Caco-2 (cell line): ENCODE measurements at regions of chr7 and their contacts with region 1.

Region 1: GRCh38 chr7:111486472-111487142 is 75.7 kb downstream of the IMMP2L start:
- DNase-seq: peak in 1 of 2 experiments; percentile 43
- H3K4me3 ChIP-seq: no peak overlapping the region
- H3K4me3 Mint-ChIP-seq: no peak overlapping the region
- H3K27ac Mint-ChIP-seq: no peak overlapping the region
- H3K4me1 ChIP-seq: no peaks in the 10 kb centered on the region
- H3K4me1 Mint-ChIP-seq: no peaks in the 10 kb centered on the region
- H3K27me3 ChIP-seq: no peaks in the 10 kb centered on the region
- H3K27me3 Mint-ChIP-seq: no peaks in the 10 kb centered on the region
- CTCF ChIP-seq: peak; percentile 61 to 66

Region 2: GRCh38 chr7:111089822-111090426 is 396.7 kb before region 1 on chr7:
- CTCF ChIA-PET with region 1: no interaction called
- POLR2A ChIA-PET with region 1: no interaction called
- intact Hi-C with region 1: loop called (anchors 1 kb)
- DNase-seq: peak in 1 of 2 experiments; percentile 26
- H3K4me3 ChIP-seq: no peak overlapping the region
- H3K4me3 Mint-ChIP-seq: no peak overlapping the region
- H3K27ac Mint-ChIP-seq: no peak overlapping the region
- H3K4me1 ChIP-seq: no peaks in the 10 kb centered on the region
- H3K4me1 Mint-ChIP-seq: no peaks in the 10 kb centered on the region
- H3K27me3 ChIP-seq: no peaks in the 10 kb centered on the region
- H3K27me3 Mint-ChIP-seq: no peaks in the 10 kb centered on the region
- CTCF ChIP-seq: peak; percentile 50 to 63

Region 3: GRCh38 chr7:111312964-111313363 is 173.6 kb before region 1 on chr7:
- CTCF ChIA-PET with region 1: no interaction called
- POLR2A ChIA-PET with region 1: no interaction called
- intact Hi-C with region 1: loop called (anchors 1 kb)
- DNase-seq: peak; percentile 18 to 34
- H3K4me3 ChIP-seq: no peak overlapping the region
- H3K4me3 Mint-ChIP-seq: no peak overlapping the region
- H3K27ac Mint-ChIP-seq: no peak overlapping the region
- H3K4me1 ChIP-seq: no peaks in the 10 kb centered on the region
- H3K4me1 Mint-ChIP-seq: no peaks in the 10 kb centered on the region
- H3K27me3 ChIP-seq: no peaks in the 10 kb centered on the region
- H3K27me3 Mint-ChIP-seq: no peaks in the 10 kb centered on the region
- CTCF ChIP-seq: peak in 1 of 2 experiments; percentile 4

Region 4: DNA sequence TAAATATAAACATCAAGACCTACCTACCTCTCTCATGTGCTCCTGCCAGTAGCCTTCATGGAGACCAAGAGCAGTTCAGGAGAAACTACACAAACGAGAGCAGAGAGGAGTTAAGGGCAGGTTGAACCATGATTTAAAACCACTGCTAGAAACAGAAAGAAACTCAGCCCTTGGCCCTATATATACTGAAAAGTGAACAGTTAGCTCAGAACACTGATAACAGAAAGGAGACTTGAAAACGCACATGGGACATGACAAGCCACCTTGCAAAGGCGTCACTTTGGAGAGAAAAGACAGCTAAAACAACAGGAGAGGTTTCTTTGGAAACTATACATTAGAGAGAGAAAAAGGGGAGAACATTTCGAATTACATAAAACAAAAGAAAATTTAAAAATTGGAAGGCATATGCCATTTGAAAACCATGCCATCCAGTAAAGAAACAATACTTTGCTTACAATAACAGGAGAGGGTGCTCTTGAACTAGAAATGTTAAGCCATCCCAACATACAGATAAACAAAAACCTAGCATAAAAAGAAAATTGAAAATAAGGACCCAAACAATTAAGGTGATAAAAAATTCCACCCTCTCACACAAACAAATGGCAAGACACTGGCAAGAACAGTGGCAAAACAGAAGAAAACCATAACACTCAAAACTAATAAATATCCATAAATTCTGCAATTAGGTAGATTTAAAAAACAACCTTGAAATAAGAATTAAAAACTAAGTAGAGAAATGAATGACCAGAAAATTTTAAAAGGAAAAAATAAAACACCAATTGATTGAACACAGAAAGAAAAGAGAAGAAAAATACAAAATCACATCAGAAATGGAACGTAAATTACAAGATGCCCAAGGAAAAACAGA is 157.0 kb before region 1 on chr7:
- CTCF ChIA-PET with region 1: no interaction called
- POLR2A ChIA-PET with region 1: no interaction called
- intact Hi-C with region 1: loop called (anchors 1 kb)
- DNase-seq: no peak
- H3K4me3 ChIP-seq: no peak overlapping the region
- H3K4me3 Mint-ChIP-seq: no peak overlapping the region
- H3K27ac Mint-ChIP-seq: no peak overlapping the region
- H3K4me1 ChIP-seq: no peaks in the 10 kb centered on the region
- H3K4me1 Mint-ChIP-seq: no peaks in the 10 kb centered on the region
- H3K27me3 ChIP-seq: no peaks in the 10 kb centered on the region
- H3K27me3 Mint-ChIP-seq: peaks cover 2% of the 10 kb centered on the region
- CTCF ChIP-seq: no peak

Region 5: DNA sequence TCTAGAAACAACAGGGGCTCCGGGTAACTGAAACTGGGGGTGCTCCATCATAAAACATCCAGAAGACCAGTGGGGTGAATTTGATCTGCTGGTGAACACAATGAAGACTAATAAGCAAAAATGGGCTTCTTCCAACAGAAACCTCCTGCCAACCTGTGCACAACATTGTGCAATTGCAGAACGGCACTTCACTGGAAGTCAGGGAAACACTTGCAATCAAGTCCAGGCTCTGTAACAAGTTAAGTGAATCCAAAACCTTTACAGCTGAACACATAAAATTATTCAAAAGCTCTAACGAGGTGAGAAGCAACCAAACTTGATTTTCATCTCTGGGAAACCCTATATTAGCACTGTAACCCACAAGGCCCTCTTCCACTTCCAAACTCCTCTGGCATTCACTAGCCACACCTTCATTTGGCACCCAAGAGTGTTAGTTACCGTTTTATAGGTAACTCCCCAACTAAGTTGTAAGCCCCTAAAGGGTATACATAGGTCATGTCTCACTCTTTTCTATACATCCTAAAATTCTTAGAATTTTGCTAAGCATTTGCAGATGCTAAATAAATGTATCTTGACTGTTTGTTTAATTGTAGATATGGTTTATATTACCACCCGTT is 53.7 kb after region 1 on chr7:
- CTCF ChIA-PET with region 1: no interaction called
- POLR2A ChIA-PET with region 1: no interaction called
- intact Hi-C with region 1: no loop called
- DNase-seq: no peak
- H3K4me3 ChIP-seq: no peak overlapping the region
- H3K4me3 Mint-ChIP-seq: no peak overlapping the region
- H3K27ac Mint-ChIP-seq: no peak overlapping the region
- H3K4me1 ChIP-seq: no peaks in the 10 kb centered on the region
- H3K4me1 Mint-ChIP-seq: no peaks in the 10 kb centered on the region
- H3K27me3 ChIP-seq: no peaks in the 10 kb centered on the region
- H3K27me3 Mint-ChIP-seq: no peaks in the 10 kb centered on the region
- CTCF ChIP-seq: no peak

Region 6: GRCh38 chr7:111730476-111731300 is 244.1 kb after region 1 on chr7:
- CTCF ChIA-PET with region 1: no interaction called
- POLR2A ChIA-PET with region 1: no interaction called
- intact Hi-C with region 1: loop called (anchors 1 kb)
- DNase-seq: peak in 1 of 2 experiments; percentile 26
- H3K4me3 ChIP-seq: no peak overlapping the region
- H3K4me3 Mint-ChIP-seq: no peak overlapping the region
- H3K27ac Mint-ChIP-seq: no peak overlapping the region
- H3K4me1 ChIP-seq: no peaks in the 10 kb centered on the region
- H3K4me1 Mint-ChIP-seq: no peaks in the 10 kb centered on the region
- H3K27me3 ChIP-seq: no peaks in the 10 kb centered on the region
- H3K27me3 Mint-ChIP-seq: no peaks in the 10 kb centered on the region
- CTCF ChIP-seq: peak; percentile 17 to 47